Spleen (tissue), 13 donors: ENCODE measurements at regions of chr1 and their contacts with region 1.

Region 1: GRCh38 chr1:159071970-159072582 is 4.5 kb downstream of the AIM2 start:
- DNase-seq: no peak
- H3K4me3 ChIP-seq: no peak overlapping the region
- H3K27ac ChIP-seq: peak overlapping the region in 4 of 8 donors; percentile 87 to 94 (median 93)
- H3K4me1 ChIP-seq: peaks cover 34 to 98% (median 66%) of the 10 kb centered on the region in 6 donors
- H3K27me3 ChIP-seq: no peaks in the 10 kb centered on the region
- CTCF ChIP-seq: peak; percentile 62 to 92 (median 84)
- POLR2A ChIP-seq: no peak

Region 2: DNA sequence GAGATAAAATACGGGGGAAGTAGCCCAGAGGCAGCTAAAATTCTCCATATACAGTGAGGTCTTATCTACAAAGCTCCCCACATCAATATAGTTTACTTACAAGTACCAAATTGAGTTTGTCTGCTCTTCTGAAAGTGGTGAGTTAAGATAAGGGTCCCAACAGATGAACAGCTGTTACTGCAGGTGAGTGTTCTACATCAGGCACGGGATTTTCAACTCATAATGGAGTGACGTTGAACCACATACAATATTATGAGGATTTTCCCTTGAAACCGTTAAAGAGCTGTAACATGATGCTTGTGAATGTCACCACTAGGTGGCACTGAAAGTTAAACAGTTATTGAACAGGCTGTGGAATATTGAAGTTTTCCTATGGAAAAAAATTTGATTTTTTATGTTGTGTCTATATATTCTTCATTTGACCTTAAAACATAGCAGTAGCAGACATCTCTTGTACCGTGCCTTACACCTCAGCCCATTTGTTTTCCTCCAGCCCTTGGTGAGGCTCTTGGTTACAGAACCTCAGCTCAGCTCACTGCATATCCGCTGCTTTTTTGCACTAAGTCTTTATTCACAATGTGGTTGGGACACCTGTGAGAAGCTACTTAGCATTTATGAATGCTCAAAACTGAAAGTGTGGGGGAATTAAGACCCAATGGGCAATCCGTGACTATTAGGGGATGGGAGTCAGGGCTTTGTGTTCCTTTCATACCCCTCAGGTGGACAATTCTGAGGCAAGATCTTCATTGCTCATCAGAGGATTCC is 868.2 kb before region 1 on chr1:
- intact Hi-C with region 1: loop called (anchors 5 kb)
- DNase-seq: no peak
- H3K4me3 ChIP-seq: peak overlapping the region in 1 of 8 donors; percentile 21
- H3K27ac ChIP-seq: peak overlapping the region in 1 of 8 donors; percentile 40
- H3K4me1 ChIP-seq: peaks cover 0 to 15% (median 11%) of the 10 kb centered on the region in 6 donors
- H3K27me3 ChIP-seq: peaks cover 0 to 7% (median 0%) of the 10 kb centered on the region in 7 donors
- CTCF ChIP-seq: peak; percentile 49 to 85 (median 76)
- POLR2A ChIP-seq: no peak

Region 3: GRCh38 chr1:158943059-158943458 is 129.0 kb before region 1 on chr1:
- intact Hi-C with region 1: no loop called
- DNase-seq: no peak
- H3K4me3 ChIP-seq: no peak overlapping the region
- H3K27ac ChIP-seq: no peak overlapping the region
- H3K4me1 ChIP-seq: no peaks in the 10 kb centered on the region
- H3K27me3 ChIP-seq: no peaks in the 10 kb centered on the region
- CTCF ChIP-seq: no peak
- POLR2A ChIP-seq: no peak

Region 4: DNA sequence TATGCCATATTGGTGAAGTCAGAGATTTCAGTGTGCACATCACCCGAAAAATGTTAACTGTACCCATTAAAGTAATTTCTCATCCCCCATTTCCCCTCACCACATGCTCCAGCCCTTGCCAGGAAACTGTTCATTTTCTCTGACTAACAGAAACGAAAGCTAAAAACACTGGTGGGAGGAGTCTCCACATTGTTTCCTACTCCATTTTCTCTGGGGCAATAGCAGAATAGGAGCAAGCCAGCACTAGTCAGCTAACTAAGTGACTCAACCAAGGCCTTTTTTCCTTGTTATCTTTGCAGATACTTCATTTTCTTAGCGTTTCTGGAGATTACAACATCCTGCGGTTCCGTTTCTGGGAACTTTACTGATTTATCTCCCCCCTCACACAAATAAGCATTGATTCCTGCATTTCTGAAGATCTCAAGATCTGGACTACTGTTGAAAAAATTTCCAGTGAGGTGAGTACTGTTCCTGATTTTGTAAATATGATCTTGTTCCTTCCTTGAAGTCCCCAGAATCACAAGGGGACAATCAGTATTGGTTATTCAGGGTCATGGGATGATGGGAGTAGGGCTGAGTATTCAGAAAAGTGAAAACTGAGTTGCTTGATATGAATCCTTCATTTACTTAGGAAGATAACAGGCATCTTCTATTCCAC is 62.2 kb before region 1 on chr1 and contains the start of gene IFI16:
- intact Hi-C with region 1: loop called (anchors 10 kb)
- DNase-seq: no peak
- H3K4me3 ChIP-seq: peak within 1 kb of the TSS; percentile 54 to 83 (median 66)
- H3K27ac ChIP-seq: peak within 1 kb of the TSS; percentile 90 to 96 (median 94)
- H3K4me1 ChIP-seq: peaks cover 32 to 84% (median 64%) of the 10 kb centered on the region in 6 donors
- H3K27me3 ChIP-seq: no peaks in the 10 kb centered on the region
- CTCF ChIP-seq: no peak
- POLR2A ChIP-seq: peak; percentile 74 to 93 (median 80)
- total RNA-seq, gene IFI16: 155 to 201 (median 175) TPM